B cell (primary cell): ENCODE measurements at regions of chr4 and their contacts with region 1.

Region 1: DNA sequence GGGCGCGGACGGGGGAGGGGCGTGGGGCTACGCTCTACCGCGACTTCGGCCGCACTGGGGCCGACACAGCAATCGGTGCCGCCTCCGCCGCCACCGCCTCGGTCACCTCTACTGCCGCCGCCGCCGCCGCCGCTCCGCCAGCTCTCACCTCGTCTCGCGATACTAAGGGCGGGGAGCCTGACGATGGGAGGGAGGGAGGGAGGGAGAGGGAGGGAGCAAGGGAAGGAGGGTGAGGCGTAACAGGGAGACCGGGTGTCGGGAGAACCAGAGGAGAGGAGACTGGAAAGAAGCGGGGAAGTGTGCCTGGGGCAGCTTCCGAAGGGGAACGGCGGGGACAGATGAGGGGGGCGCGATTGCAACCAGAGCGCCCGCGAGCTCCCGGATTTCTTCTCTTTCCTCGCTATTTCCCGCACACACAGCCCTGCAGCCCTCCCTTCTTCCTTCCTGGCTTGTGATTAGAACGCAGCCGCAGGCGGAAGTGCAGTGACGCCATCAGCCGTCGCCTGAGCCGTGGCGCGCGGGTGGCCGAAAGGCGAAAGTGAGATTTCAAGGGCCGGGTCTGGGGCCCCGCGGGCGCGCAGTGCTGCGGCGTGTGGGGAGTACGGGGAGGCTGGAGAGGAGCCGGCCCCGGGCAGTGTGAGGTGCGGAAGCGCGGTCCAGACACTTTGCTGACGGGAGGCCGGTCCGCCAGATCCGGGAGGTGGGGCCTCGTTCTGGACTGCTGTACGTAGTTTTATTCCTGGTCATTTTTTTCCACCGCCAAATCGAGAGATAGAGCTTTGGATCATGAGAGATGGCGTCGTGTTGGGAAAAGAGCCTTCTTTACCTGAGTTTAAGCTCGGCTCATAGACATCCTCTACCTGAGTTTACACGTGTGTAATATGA is at the start of gene ANKRD17:
- DNase-seq: peak; percentile 96
- ATAC-seq: peak; percentile 73
- H3K4me3 ChIP-seq: peak within 1 kb of the TSS; percentile 68 to 94 (median 87)
- H3K4me3 Mint-ChIP-seq: peak within 1 kb of the TSS; percentile 100
- H3K27ac ChIP-seq: peak within 1 kb of the TSS; percentile 96 to 98
- H3K27ac Mint-ChIP-seq: peak within 1 kb of the TSS; percentile 100
- H3K4me1 ChIP-seq: peaks cover 30 to 35% of the 10 kb centered on the region in 2 donors
- H3K4me1 Mint-ChIP-seq: peaks cover 56% of the 10 kb centered on the region
- H3K27me3 ChIP-seq: no peaks in the 10 kb centered on the region
- H3K27me3 Mint-ChIP-seq: no peaks in the 10 kb centered on the region
- CTCF ChIP-seq: no peak
- total RNA-seq, gene ANKRD17: 69.4 and 74.6 TPM in 2 replicates

Region 2: GRCh38 chr4:73069338-73070073 is 189.4 kb before region 1 on chr4 and contains the start of gene COX18:
- CTCF ChIA-PET with region 1: interaction called, 6 read pairs
- POLR2A ChIA-PET with region 1: interaction called, 5 read pairs
- intact Hi-C with region 1: loop called (anchors 1 kb)
- DNase-seq: peak; percentile 99
- ATAC-seq: peak; percentile 80
- H3K4me3 ChIP-seq: peak within 1 kb of the TSS; percentile 72 to 90 (median 78)
- H3K4me3 Mint-ChIP-seq: peak within 1 kb of the TSS; percentile 96
- H3K27ac ChIP-seq: peak within 1 kb of the TSS; percentile 98
- H3K27ac Mint-ChIP-seq: peak within 1 kb of the TSS; percentile 97
- H3K4me1 ChIP-seq: peaks cover 17 to 26% of the 10 kb centered on the region in 2 donors
- H3K4me1 Mint-ChIP-seq: peaks cover 30% of the 10 kb centered on the region
- H3K27me3 ChIP-seq: no peaks in the 10 kb centered on the region
- H3K27me3 Mint-ChIP-seq: no peaks in the 10 kb centered on the region
- CTCF ChIP-seq: no peak
- total RNA-seq, gene COX18: 12.7 and 14.4 TPM in 2 replicates

Region 3: GRCh38 chr4:73127839-73128453 is 131.0 kb before region 1 on chr4:
- CTCF ChIA-PET with region 1: interaction called, 7 read pairs
- POLR2A ChIA-PET with region 1: no interaction called
- intact Hi-C with region 1: loop called (anchors 2 kb)
- DNase-seq: no peak
- ATAC-seq: no peak
- H3K4me3 ChIP-seq: no peak overlapping the region
- H3K4me3 Mint-ChIP-seq: no peak overlapping the region
- H3K27ac ChIP-seq: no peak overlapping the region
- H3K27ac Mint-ChIP-seq: no peak overlapping the region
- H3K4me1 ChIP-seq: no peaks in the 10 kb centered on the region
- H3K4me1 Mint-ChIP-seq: no peaks in the 10 kb centered on the region
- H3K27me3 ChIP-seq: no peaks in the 10 kb centered on the region
- H3K27me3 Mint-ChIP-seq: no peaks in the 10 kb centered on the region
- CTCF ChIP-seq: peak; percentile 20

Region 4: DNA sequence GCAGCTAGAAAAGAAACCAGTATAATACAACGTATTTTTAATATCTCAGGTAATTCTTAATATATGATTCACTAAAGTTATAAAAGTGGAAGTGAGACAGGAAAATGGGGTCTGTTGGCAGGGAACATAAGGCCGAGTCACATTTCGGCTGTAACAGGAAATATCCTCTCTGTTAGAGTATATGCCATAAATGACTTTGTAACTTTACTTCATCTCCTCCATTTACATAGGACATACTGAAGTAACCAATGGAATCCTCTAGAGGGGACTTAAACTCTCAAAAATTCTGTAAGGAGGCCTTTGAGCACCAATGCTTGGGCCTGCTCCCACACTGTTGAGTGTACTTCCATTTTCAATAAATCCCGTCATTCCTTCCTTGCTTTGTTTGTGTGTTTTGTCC is 71.6 kb before region 1 on chr4:
- CTCF ChIA-PET with region 1: interaction called, 4 read pairs
- POLR2A ChIA-PET with region 1: no interaction called
- intact Hi-C with region 1: loop called (anchors 5 kb)
- DNase-seq: peak; percentile 40
- ATAC-seq: peak; percentile 28
- H3K4me3 ChIP-seq: no peak overlapping the region
- H3K4me3 Mint-ChIP-seq: peak overlapping the region; percentile 33
- H3K27ac ChIP-seq: peak overlapping the region; percentile 16 to 68
- H3K27ac Mint-ChIP-seq: no peak overlapping the region
- H3K4me1 ChIP-seq: peaks cover 7 to 10% of the 10 kb centered on the region in 2 donors
- H3K4me1 Mint-ChIP-seq: peaks cover 26% of the 10 kb centered on the region
- H3K27me3 ChIP-seq: no peaks in the 10 kb centered on the region
- H3K27me3 Mint-ChIP-seq: no peaks in the 10 kb centered on the region
- CTCF ChIP-seq: no peak

Region 5: DNA sequence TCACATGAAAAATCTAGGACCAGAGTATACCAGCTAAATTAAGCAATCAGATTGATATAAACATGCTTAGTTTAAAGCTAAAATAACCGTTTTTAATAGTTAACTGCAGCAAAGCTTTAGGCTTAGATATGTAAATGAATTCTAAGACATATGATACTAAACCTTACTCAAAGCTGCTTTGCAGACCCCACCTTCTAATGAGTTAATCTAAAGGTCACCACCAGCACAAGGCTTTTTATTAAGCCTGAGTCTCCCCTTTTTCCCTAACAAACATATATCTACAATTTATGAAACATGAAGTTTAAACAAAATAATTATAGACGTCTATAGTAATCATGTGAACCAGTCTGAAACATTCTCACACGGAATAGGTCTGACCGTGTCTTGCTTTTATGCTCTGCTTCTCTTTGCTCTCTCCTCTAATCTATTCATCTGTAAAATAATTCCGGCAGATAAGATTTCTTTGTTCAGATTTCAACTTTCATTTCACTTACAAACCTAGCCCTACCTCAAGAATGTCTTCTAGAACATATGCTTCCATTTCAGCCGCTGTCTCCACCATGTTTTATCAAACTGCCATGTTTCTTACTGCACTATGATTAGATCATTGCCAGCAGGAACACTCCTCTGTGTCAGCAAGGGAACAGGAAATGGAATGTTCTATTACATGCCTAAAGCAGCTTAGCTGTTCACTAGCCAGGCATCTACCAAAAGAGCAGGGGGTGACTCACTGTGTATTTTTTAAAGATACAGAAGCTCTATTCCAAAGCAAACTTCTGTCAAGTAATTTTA is 36.3 kb before region 1 on chr4:
- CTCF ChIA-PET with region 1: no interaction called
- POLR2A ChIA-PET with region 1: interaction called, 7 read pairs
- intact Hi-C with region 1: loop called (anchors 2 kb)
- DNase-seq: peak; percentile 76
- ATAC-seq: peak; percentile 97
- H3K4me3 ChIP-seq: peak overlapping the region; percentile 41 to 68 (median 58)
- H3K4me3 Mint-ChIP-seq: no peak overlapping the region
- H3K27ac ChIP-seq: peak overlapping the region; percentile 74 to 89
- H3K27ac Mint-ChIP-seq: no peak overlapping the region
- H3K4me1 ChIP-seq: peaks cover 27 to 32% of the 10 kb centered on the region in 2 donors
- H3K4me1 Mint-ChIP-seq: peaks cover 32% of the 10 kb centered on the region
- H3K27me3 ChIP-seq: no peaks in the 10 kb centered on the region
- H3K27me3 Mint-ChIP-seq: no peaks in the 10 kb centered on the region
- CTCF ChIP-seq: no peak

Region 6: DNA sequence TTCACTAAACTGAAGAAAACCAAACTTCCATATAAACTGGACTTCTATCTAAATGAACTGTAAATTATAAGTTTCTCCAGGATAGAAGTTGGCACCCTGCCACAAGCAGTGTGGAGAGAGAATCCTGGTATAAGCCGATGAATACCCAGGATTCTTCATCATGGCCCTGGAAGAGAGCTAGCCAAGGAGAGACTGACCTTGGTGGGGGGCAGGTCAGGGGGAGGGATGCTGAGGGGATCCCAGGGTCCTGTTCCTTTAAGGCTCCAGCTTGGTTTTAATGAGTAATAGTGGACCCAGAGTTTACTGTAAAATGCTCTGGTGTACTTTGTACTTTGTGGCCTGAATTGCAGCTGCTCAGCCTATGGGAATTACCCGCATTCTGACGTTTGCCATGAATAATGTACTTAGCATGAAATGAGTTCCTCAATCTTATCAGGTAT is 344.4 kb after region 1 on chr4:
- CTCF ChIA-PET with region 1: no interaction called
- POLR2A ChIA-PET with region 1: no interaction called
- intact Hi-C with region 1: loop called (anchors 10 kb)
- DNase-seq: peak; percentile 45
- ATAC-seq: peak; percentile 19
- H3K4me3 ChIP-seq: no peak overlapping the region
- H3K4me3 Mint-ChIP-seq: peak overlapping the region; percentile 44
- H3K27ac ChIP-seq: no peak overlapping the region
- H3K27ac Mint-ChIP-seq: no peak overlapping the region
- H3K4me1 ChIP-seq: peaks cover 32 to 37% of the 10 kb centered on the region in 2 donors
- H3K4me1 Mint-ChIP-seq: peaks cover 53% of the 10 kb centered on the region
- H3K27me3 ChIP-seq: no peaks in the 10 kb centered on the region
- H3K27me3 Mint-ChIP-seq: no peaks in the 10 kb centered on the region
- CTCF ChIP-seq: no peak

Region 7: GRCh38 chr4:74157561-74158465 is 898.9 kb after region 1 on chr4 and contains the start of gene MTHFD2L:
- CTCF ChIA-PET with region 1: no interaction called
- POLR2A ChIA-PET with region 1: interaction called, 4 read pairs
- intact Hi-C with region 1: loop called (anchors 5 kb)
- DNase-seq: peak; percentile 87
- ATAC-seq: peak; percentile 97
- H3K4me3 ChIP-seq: peak within 1 kb of the TSS; percentile 66 to 84 (median 71)
- H3K4me3 Mint-ChIP-seq: peak within 1 kb of the TSS; percentile 97
- H3K27ac ChIP-seq: peak within 1 kb of the TSS; percentile 67 to 75
- H3K27ac Mint-ChIP-seq: peak within 1 kb of the TSS; percentile 92
- H3K4me1 ChIP-seq: peaks cover 11 to 13% of the 10 kb centered on the region in 2 donors
- H3K4me1 Mint-ChIP-seq: peaks cover 21% of the 10 kb centered on the region
- H3K27me3 ChIP-seq: peaks cover 0 to 9% (median 1%) of the 10 kb centered on the region in 4 experiments
- H3K27me3 Mint-ChIP-seq: peaks cover 11% of the 10 kb centered on the region
- CTCF ChIP-seq: no peak
- total RNA-seq, gene MTHFD2L: 12.6 and 13.3 TPM in 2 replicates